Activated CD4-positive, alpha-beta T cell treated with anti-CD3 and anti-CD28 coated beads for 36 hours (primary cell): ENCODE measurements at regions of chr9 and their contacts with region 1.

Region 1: GRCh38 chr9:32839013-32839885 is 55.9 kb downstream of the TMEM215 start:
- DNase-seq: no peak
- ATAC-seq: no peak
- H3K4me3 Mint-ChIP-seq: no peak overlapping the region
- H3K27ac Mint-ChIP-seq: no peak overlapping the region
- H3K4me1 Mint-ChIP-seq: no peaks in the 10 kb centered on the region
- H3K27me3 Mint-ChIP-seq: peaks cover 3% of the 10 kb centered on the region

Region 2: DNA sequence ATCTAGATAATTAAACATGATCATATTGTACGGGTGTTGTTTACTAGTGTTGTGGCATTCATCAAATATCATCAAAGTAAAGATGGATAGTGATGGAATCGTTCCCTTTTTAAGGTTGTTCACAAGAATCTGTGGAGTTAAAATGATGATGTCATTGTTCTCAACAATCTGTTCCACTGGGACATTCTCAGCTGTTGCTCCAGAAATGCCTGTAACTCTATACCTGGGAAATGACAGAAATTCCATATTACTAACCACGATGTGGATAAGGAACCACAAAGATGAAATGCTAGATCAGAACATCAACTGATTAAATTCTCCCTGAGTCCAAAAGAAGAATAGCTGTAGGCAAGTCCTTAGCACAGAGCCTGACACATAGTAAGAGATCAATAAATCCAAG is 351.3 kb before region 1 on chr9:
- CTCF ChIA-PET with region 1: no interaction called
- POLR2A ChIA-PET with region 1: no interaction called
- intact Hi-C with region 1: no loop called
- DNase-seq: no peak
- ATAC-seq: no peak
- H3K4me3 Mint-ChIP-seq: no peak overlapping the region
- H3K27ac Mint-ChIP-seq: no peak overlapping the region
- H3K4me1 Mint-ChIP-seq: no peaks in the 10 kb centered on the region
- H3K27me3 Mint-ChIP-seq: no peaks in the 10 kb centered on the region

Region 3: DNA sequence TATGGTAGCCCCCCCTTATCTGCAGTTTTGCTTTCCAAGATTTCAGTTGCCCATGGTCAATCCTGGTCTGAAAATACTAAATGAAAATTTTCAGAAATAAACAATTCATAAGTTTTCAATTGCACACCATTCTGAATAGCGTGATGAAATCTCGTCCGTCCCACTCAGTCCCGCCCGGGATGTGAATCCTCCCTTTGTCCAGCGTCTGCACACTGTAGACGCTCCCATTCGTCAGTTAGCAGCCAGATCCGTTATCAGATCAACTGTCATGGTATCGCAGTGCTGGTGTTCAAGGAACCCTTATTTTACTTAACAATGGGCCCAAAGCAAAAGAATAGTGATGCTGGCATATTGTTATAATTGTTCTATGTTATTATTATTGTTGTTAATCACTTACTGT is 42.7 kb after region 1 on chr9:
- CTCF ChIA-PET with region 1: interaction called, 5 read pairs
- POLR2A ChIA-PET with region 1: no interaction called
- intact Hi-C with region 1: loop called in 1 of 2 experiments (anchors 10 kb)
- DNase-seq: no peak
- ATAC-seq: no peak
- H3K4me3 Mint-ChIP-seq: no peak overlapping the region
- H3K27ac Mint-ChIP-seq: no peak overlapping the region
- H3K4me1 Mint-ChIP-seq: no peaks in the 10 kb centered on the region
- H3K27me3 Mint-ChIP-seq: no peaks in the 10 kb centered on the region

Region 4: GRCh38 chr9:32928145-32928763 is 89.0 kb after region 1 on chr9:
- CTCF ChIA-PET with region 1: no interaction called
- POLR2A ChIA-PET with region 1: no interaction called
- intact Hi-C with region 1: no loop called
- DNase-seq: no peak
- ATAC-seq: no peak
- H3K4me3 Mint-ChIP-seq: no peak overlapping the region
- H3K27ac Mint-ChIP-seq: no peak overlapping the region
- H3K4me1 Mint-ChIP-seq: no peaks in the 10 kb centered on the region
- H3K27me3 Mint-ChIP-seq: peaks cover 5% of the 10 kb centered on the region